A549 (cell line): ENCODE measurements at regions of chr1 and their contacts with region 1.

Region 1: DNA sequence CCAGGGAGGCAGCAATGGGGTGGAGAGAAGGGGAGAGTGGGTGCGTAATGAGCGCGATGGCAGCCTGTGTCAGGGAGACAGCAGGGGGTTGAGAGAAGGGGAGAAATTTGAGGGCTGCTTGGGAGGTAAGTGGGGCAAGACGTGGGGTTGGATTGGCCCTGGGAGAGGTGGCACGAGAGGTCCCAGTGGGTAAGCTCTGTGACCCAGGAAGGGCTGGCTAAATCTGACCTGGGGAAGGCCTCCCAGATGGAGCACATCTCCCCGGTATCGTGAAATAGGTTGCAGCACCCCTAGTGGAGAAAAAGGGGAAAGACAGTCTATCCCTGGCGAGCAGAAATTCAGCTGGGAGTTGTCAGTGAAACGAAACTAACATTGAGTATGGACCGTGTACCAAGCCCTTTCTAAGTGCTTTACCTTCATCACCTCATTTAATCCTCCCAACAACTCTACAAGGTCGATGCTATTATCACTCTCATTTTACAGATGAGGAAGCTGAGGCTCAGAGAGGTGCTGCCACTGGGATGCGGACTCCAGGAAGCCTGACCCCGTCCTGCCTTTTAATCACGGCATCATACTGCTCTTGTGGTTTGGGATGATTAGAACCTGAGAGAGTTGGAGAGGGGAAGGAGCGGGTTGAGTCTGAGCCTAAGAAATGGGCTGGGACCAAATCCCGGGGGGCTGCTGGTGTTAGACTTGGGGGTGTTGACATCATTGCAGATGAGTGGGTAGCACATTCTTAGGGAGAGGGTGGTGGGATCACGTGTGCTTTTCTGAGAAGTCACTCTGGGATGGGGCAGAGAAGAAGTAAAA is 56.6 kb upstream of the RPL11 start:
- DNase-seq: peak; percentile 77 to 86
- ATAC-seq: peak; percentile 77 to 80
- H3K4me3 ChIP-seq: peak overlapping the region; percentile 37
- H3K27ac ChIP-seq: peak overlapping the region; percentile 91 to 95
- H3K4me1 ChIP-seq: peaks cover 40% of the 10 kb centered on the region
- CTCF ChIP-seq: peak; percentile 70
- EP300 ChIP-seq: no peak
- POLR2A ChIP-seq: no peak
- RAD21 ChIP-seq: peak; percentile 78 to 81

Region 2: DNA sequence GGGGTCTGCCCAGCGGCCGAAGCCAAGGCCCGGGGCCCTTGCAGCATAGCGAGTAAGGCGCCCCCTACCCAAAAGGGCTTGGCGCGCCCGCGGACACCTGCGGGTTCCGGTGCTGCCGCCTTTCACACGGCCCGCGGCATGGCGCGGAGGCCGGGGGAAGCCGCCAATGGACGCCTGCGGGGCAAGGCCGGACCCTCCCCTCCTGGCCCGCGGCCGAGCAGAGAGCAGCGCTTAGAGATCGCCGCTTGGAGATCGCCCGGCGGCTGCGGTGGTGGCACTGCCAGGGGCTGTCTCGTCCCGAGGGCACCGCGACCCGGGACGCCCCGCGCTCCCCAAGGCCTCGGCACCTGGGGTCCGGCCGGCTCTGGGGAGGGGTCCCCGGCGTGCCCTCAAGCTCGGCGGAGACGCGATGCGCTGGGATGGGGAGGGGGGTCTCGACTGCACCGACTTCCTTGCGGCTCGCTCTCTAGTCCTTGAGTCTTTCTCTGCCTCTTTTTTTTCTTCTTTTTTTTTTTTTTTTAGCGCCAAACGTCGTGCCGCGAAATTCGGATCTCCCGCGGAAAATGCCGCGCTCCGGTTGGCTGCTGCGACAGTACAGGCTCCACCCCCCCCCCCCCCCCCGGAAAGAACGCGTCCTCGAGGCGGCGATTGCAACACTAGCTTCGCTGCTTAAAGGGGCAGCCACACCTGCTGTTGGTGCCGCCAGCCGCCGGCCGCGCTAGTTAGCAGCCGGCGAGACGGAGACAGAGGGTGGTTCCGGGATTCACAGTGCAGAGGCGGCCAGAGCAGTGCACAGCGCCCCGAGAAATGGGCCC is 104.1 kb before region 1 on chr1 and contains the start of gene E2F2:
- CTCF ChIA-PET with region 1: interaction called, 10 read pairs
- POLR2A ChIA-PET with region 1: no interaction called
- DNase-seq: peak; percentile 79 to 85
- ATAC-seq: peak; percentile 72 to 73
- H3K4me3 ChIP-seq: peak within 1 kb of the TSS; percentile 90
- H3K27ac ChIP-seq: peak within 1 kb of the TSS; percentile 76 to 94
- H3K4me1 ChIP-seq: peaks cover 53% of the 10 kb centered on the region
- CTCF ChIP-seq: no peak
- EP300 ChIP-seq: no peak
- POLR2A ChIP-seq: peak; percentile 29; the same call in 1 of the 2 replicates
- RAD21 ChIP-seq: no peak
- polyA plus RNA-seq, gene E2F2: 0.90 and 1.6 TPM in 2 replicates

Region 3: GRCh38 chr1:23567996-23568607 is 66.9 kb before region 1 on chr1:
- CTCF ChIA-PET with region 1: interaction called, 699 read pairs
- POLR2A ChIA-PET with region 1: no interaction called
- DNase-seq: no peak
- ATAC-seq: peak in 1 of 2 experiments; percentile 37; a peak in 1 of 6 replicates
- H3K4me3 ChIP-seq: peak overlapping the region; percentile 33
- H3K27ac ChIP-seq: peak overlapping the region; percentile 88 to 96
- H3K4me1 ChIP-seq: peaks cover 59% of the 10 kb centered on the region
- CTCF ChIP-seq: no peak
- EP300 ChIP-seq: no peak
- POLR2A ChIP-seq: no peak
- RAD21 ChIP-seq: no peak

Region 4: GRCh38 chr1:23591460-23592208 is 43.4 kb before region 1 on chr1:
- CTCF ChIA-PET with region 1: interaction called, 143 read pairs
- POLR2A ChIA-PET with region 1: interaction called, 3 read pairs
- DNase-seq: peak; percentile 42 to 86
- ATAC-seq: peak; percentile 78
- H3K4me3 ChIP-seq: no peak overlapping the region
- H3K27ac ChIP-seq: peak overlapping the region; percentile 96 to 100
- H3K4me1 ChIP-seq: peaks cover 96% of the 10 kb centered on the region
- CTCF ChIP-seq: no peak
- EP300 ChIP-seq: peak; percentile 83 to 85; a peak in 4 of 5 replicates
- POLR2A ChIP-seq: no peak
- RAD21 ChIP-seq: peak in 1 of 2 experiments; percentile 25; a peak in 2 of 5 replicates

Region 5: DNA sequence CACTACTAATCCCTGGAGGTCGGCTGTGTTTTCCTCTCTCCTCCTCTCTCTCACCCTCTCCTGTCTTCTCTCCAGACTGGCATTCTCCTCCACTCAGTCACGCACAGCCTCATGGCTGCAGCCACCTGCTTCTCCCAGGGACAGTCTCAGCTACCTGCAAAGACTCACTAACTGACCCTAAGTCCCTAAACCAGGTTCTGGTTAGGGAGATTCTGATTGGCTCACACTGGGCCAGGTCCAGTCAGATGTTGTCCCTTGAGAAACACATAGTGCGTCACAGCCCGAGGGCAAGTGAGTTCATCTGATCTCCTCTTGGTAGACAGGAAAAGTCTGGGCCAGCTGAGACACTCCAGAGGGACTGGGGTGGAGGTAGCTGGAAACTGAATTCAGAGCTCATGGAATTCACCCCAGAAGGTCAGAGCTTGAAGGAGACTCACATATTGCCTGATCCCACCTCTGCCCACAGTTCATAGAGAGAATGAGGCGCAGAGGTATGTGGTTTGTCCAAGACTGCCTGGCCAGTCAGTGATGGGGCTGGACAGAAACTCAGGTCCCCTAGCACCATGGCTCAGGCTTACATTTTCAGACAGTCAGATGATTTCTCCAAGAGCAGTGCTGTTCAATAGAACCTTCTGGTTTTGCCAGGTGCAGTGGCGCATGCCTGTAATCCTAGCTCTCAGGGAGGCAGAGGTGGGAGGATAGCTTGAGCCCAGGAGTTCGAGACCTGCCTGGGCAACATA is 16.2 kb after region 1 on chr1:
- CTCF ChIA-PET with region 1: interaction called, 36 read pairs
- POLR2A ChIA-PET with region 1: no interaction called
- DNase-seq: peak; percentile 47 to 69
- ATAC-seq: peak; percentile 93 to 95
- H3K4me3 ChIP-seq: no peak overlapping the region
- H3K27ac ChIP-seq: peak overlapping the region; percentile 47 to 54
- H3K4me1 ChIP-seq: peaks cover 13% of the 10 kb centered on the region; the same call in 2 of the 3 replicates
- CTCF ChIP-seq: no peak
- EP300 ChIP-seq: no peak
- POLR2A ChIP-seq: no peak
- RAD21 ChIP-seq: no peak

Region 6: GRCh38 chr1:23673086-23673813 is 38.2 kb after region 1 on chr1:
- CTCF ChIA-PET with region 1: interaction called, 11 read pairs
- POLR2A ChIA-PET with region 1: no interaction called
- DNase-seq: peak; percentile 67 to 79
- ATAC-seq: peak; percentile 85 to 86
- H3K4me3 ChIP-seq: no peak overlapping the region
- H3K27ac ChIP-seq: no peak overlapping the region
- H3K4me1 ChIP-seq: peaks cover 15% of the 10 kb centered on the region
- CTCF ChIP-seq: no peak
- EP300 ChIP-seq: no peak
- POLR2A ChIP-seq: no peak
- RAD21 ChIP-seq: no peak